ENCODE measurements at regions of chr13 and their contacts with region 1.

Region 1: DNA sequence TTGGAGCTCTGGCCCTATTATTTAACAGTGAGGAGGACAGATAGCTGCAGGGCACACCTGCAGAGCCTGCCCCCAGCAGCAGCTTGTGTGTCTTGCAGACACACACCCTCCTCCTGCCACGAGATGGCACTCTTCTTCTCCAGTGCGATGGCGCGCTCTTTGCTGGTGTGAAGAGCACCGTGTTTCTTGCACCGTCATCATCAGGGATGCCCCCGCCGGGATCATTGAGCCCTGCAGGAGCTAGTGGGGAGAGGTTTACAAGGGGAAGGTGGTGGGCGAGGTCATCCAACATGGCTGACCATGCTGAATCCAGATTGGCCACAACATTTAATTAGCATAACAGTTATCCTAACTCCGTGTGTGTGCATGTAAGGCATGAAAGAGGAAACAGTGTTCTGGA is 105.6 kb downstream of the RAB20 start:
- DNase-seq: peak; percentile 62
- H3K4me3 ChIP-seq: no peak overlapping the region
- H3K27ac ChIP-seq: no peak overlapping the region
- H3K4me1 ChIP-seq: no peaks in the 10 kb centered on the region
- H3K27me3 ChIP-seq: no peaks in the 10 kb centered on the region
- CTCF ChIP-seq: peak; percentile 83 to 90
- POLR2A ChIP-seq: no peak

Region 2: DNA sequence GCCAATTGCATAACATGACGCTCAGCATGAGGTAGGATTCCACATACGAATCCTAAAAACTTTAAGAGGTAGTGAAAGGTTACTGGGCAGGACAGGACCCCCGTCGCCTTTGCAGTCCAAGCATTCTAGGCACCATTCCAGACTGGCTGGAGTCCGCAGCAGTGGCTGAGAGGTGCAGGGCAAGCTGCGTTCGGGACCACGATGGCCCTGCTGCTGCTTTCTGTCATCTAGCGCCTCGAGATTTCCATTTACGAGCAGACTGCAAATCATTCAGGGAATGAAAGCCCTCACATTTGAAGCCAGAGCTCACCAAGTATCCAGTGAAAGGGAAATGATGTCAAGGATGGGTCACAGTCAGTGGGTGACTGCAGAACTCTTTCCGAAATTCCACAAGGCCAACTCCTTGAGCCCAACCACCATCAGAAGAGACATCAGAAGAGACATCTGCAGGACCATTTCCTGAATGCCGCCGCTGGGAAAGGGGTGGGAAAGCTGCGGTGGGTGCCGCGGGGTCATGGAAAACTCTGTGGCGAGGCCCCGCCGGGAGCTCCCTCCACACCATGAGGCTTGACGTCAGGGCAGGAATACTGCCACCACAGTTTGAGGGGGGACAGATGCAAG is 237.2 kb before region 1 on chr13:
- CTCF ChIA-PET with region 1: interaction called, 22 read pairs
- POLR2A ChIA-PET with region 1: no interaction called
- dilution Hi-C with region 1: no loop called
- intact Hi-C with region 1: loop called (anchors 1 kb)
- DNase-seq: no peak
- H3K4me3 ChIP-seq: no peak overlapping the region
- H3K27ac ChIP-seq: no peak overlapping the region
- H3K4me1 ChIP-seq: peaks cover 18% of the 10 kb centered on the region
- H3K27me3 ChIP-seq: no peaks in the 10 kb centered on the region
- CTCF ChIP-seq: no peak
- POLR2A ChIP-seq: no peak

Region 3: DNA sequence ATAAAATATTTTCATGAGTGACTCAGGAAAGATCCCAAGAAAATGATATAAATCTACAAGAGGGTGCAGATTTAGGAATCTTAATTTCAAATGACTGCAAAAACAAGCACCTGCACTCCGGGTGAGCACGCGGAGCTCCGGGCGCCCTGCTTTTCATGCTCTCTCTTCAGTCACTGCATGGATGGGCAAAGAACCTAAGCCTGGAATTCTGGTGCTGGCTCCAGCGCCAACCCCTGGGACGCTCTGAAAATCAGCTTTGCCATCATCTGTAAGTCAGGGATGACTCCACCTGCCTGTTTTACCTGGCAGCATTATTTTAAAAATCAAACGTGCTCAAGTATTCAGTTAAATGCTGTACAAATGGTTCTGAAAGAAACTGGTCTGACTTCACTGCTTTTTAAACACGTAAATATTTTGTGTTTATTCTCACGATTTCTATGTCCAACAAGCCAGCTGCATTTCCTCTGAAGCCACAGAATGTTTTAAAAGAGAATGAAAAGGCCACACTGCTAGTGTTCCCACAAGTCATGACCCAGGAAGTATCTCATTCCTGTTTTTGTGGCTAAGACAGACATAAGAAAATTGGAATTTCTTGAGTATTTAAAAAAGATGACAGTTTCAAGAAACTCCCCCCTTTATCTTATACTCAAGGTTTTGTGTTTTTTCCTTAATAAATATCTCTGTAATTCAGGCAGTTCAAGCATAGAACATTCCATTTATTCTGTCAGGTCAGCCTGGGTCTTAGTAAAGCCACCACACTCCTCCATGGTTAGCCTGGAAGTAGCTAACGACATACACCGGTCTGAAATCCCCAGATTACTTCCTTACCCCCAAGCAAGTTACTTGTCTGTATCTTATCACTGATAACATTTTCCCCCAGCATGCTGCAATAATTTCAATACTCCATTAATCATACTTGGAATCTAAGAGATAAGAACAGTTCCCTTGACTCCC is 230.1 kb before region 1 on chr13:
- CTCF ChIA-PET with region 1: interaction called, 22 read pairs
- POLR2A ChIA-PET with region 1: no interaction called
- dilution Hi-C with region 1: no loop called
- intact Hi-C with region 1: loop called (anchors 1 kb)
- DNase-seq: peak; percentile 65
- H3K4me3 ChIP-seq: no peak overlapping the region
- H3K27ac ChIP-seq: peak overlapping the region; percentile 56
- H3K4me1 ChIP-seq: peaks cover 21% of the 10 kb centered on the region
- H3K27me3 ChIP-seq: no peaks in the 10 kb centered on the region
- CTCF ChIP-seq: no peak
- POLR2A ChIP-seq: no peak

Region 4: DNA sequence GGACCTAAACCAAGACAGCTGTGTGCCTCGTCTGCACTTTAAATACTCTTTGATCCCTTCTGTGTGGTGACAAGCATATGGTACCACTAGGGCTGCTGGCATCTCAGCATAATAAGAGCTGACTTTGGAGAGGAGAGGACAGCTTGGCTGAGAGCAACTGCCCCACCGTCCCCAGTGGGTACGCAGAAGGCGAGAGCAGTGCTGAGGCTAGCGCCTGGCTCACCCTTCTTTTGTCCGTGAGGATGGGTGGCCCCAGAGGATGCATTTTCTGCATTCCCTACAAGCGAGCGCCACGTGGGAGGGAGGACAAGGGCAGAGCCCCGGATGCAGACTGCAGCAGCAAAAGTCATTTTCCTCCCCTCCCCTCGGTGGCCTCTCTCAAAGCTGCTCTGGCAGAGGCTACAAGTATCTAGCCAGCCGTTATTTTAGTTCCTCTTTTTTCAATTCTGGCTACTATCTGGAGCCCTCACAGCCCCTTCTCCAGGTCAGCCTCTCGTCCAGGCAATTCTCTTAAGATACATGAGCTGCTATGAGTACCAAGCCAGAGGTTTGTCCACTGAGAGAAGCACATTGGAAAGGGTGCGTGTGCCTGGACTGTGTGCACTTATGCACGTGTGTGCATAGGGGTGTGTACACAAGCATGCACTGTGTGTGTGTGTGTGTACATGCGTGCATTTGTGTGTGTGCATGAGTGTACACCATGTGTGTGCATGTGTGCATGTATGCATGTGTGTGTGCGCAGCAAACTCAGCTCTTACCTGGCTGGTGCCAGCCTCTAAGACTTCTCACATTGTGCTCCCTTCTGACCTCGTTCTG is 54.2 kb after region 1 on chr13:
- CTCF ChIA-PET with region 1: interaction called, 11 read pairs
- POLR2A ChIA-PET with region 1: no interaction called
- dilution Hi-C with region 1: no loop called
- intact Hi-C with region 1: no loop called
- DNase-seq: no peak
- H3K4me3 ChIP-seq: no peak overlapping the region
- H3K27ac ChIP-seq: no peak overlapping the region
- H3K4me1 ChIP-seq: peaks cover 6% of the 10 kb centered on the region
- H3K27me3 ChIP-seq: no peaks in the 10 kb centered on the region
- CTCF ChIP-seq: no peak
- POLR2A ChIP-seq: no peak

Region 5: GRCh38 chr13:110819203-110820014 is 363.5 kb after region 1 on chr13:
- CTCF ChIA-PET with region 1: interaction called, 9 read pairs
- POLR2A ChIA-PET with region 1: no interaction called
- dilution Hi-C with region 1: no loop called
- intact Hi-C with region 1: loop called (anchors 5 kb)
- DNase-seq: peak; percentile 74
- H3K4me3 ChIP-seq: no peak overlapping the region
- H3K27ac ChIP-seq: no peak overlapping the region
- H3K4me1 ChIP-seq: no peaks in the 10 kb centered on the region
- H3K27me3 ChIP-seq: peaks cover 0 to 3% of the 10 kb centered on the region in 2 experiments
- CTCF ChIP-seq: peak; percentile 92 to 97
- POLR2A ChIP-seq: no peak